Left colon (tissue), 2 donors: ENCODE measurements at regions of chr2 and their contacts with region 1.

Region 1: DNA sequence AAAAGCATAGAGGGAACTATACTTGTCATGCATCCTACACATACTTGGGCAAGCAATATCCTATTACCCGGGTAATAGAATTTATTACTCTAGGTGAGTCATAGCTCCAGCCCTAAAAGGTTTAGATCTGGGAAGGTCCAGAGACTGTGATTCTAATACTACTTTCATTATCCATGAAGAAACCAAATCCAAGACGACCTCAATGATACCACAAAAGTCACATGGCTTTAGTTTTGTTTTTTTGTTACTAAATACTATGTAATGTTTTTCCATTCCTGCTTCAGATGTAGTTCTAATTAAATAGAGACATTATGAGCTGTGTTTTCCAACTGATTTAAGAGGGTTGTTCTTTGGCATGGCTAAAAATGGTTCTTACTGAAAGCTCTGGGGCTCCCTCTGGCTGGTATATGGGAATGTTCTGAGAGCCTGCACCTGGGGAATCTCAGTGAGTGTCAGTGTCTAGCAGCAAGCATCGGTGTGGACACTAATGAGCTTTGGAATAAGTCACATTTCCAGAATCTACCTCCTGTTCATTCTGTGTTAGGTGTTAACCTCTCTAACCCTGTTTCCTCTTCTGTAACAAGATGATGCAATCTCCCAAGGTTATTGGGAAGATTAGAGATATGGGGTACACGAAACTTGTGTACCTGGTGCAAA is 20.5 kb upstream of the IL1RL2 start:
- DNase-seq: peak in 1 of 2 donors; percentile 37
- ATAC-seq: peak; percentile 96

Region 2: GRCh38 chr2:102020596-102021181 is 145.6 kb before region 1 on chr2:
- intact Hi-C with region 1: loop called in 1 of 2 experiments (anchors 2 kb)
- DNase-seq: peak; percentile 77 to 88
- ATAC-seq: peak; percentile 95

Region 3: GRCh38 chr2:102575888-102576287 is 409.6 kb after region 1 on chr2:
- intact Hi-C with region 1: no loop called
- DNase-seq: no peak
- ATAC-seq: no peak